Right ventricle myocardium inferior (tissue), 1 donor: ENCODE measurements at regions of chr2 and their contacts with region 1.

Region 1: DNA sequence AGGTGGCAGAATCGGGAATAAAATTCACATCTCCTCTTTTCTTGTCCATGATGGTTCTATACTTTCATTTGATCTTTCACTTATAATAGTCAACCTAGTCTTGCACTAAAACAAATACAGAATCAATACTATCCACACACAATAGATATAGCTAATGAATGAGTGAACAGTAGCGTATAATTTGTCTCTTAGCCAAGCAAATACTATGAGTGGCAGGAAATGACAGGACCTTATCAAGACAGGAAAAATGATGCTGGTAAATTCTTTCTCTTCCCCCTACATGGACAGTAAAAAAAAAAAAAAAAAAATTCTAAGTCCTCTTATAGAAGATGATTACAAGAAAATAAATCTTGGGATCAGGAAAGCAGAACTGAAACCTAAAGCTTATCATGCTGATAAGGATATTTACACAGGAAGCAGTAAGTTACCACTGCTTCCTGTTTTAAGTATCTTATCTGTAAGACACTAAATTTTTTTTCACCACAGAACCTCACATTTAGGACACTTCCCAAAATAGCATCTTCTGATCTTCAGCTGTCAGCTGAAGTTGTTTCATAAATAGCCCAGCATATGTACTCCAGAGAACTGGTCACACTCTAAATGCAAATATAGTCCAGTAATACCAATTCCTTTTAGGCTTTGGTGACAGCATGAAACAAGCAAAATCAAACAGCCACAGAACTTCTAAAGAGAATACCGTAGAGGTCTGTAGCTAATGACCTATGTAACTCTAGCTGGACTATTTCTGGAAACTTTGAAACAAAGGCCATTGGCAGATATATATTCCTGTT is 27.0 kb downstream of the IRS1 start:
- DNase-seq: no peak
- ATAC-seq: peak; percentile 37

Region 2: GRCh38 chr2:226669905-226670304 is 102.7 kb before region 1 on chr2:
- intact Hi-C with region 1: loop called (anchors 5 kb)
- DNase-seq: no peak
- ATAC-seq: no peak

Region 3: GRCh38 chr2:226742347-226742746 is 30.2 kb before region 1 on chr2:
- intact Hi-C with region 1: loop called (anchors 5 kb)
- DNase-seq: peak; percentile 64
- ATAC-seq: peak; percentile 92

Region 4: GRCh38 chr2:226916669-226917068 is 144.1 kb after region 1 on chr2:
- intact Hi-C with region 1: no loop called
- DNase-seq: no peak
- ATAC-seq: no peak